GM18951 (cell line): ENCODE measurements at regions of chr3 and their contacts with region 1.

Region 1: DNA sequence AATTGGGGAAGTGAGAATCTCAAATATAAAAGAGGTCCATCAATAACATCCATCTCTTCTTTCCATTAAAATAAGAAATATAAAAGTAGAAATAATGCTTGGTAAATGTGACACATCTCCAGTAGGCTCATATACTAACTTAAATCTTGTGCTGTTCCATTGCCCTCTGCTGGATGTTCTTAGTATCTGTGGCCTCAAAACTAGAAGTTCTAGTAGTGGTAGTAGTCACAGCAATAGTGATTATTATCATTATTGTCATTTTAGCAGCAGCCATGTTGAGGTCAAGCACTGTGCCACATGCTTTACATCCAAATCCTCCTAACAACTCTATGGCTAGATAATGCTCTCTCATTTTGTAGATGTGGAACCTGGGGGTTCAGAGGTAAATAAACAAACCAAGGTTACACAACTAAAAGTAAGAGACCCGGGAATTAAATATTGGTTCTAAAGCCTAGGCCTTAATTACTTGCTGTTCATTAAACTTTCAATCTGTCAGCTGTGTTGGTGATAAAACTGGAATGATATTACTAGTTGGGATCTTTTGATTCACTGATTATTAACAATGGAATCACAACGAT is 20.2 kb upstream of the BTLA start:
- POLR2A ChIP-seq: no peak

Region 2: GRCh38 chr3:112143251-112143650 is 376.3 kb before region 1 on chr3:
- in situ Hi-C with region 1: loop called (anchors 10 kb)
- POLR2A ChIP-seq: no peak

Region 3: DNA sequence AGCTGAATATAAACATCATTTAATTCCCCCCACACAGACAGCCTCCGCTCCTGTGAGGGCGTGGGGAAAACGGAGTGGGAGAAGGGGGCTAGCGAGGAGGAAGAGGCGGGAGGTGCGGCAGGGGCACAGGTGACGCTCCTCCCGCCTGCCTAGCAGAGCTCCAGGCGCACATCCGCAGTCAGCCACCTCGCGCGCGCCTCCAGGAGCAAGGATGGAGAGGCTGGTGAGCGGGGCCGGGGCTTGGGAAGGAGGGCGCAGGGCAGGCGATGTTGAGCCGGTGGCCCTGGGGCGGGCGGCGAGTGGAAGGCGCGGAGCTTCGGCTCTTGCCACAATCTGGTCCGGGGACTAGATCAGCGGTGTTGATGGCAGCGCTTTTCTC is 186.5 kb before region 1 on chr3 and contains the start of gene CD200:
- in situ Hi-C with region 1: loop called (anchors 5 kb)
- POLR2A ChIP-seq: peak; percentile 60